Posterior vena cava (tissue), 2 donors: ENCODE measurements at regions of chr19 and their contacts with region 1.

Region 1: DNA sequence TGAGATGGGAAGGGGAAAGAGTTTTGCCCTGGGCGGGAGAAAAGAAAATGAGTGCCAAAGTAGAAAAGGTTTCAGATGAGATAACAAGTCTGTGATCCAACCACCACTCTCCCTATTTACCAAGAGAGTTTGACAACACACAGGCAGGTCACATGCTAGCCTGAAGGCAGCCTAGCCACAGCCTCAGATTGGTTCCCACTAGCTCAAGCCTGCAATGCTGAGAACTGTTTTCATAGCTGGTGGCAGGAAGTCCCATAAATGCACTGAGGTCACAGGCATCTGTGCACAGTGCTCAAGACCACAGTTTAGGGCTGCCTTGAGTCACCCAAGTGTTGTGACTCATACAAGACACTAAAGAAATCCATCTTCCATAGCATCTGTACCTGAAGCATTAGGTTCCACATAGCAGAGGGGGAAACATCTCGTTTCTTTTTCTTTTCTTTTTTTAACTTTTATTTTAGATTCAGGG is 18.5 kb upstream of the POP4 start:
- DNase-seq: no peak

Region 2: DNA sequence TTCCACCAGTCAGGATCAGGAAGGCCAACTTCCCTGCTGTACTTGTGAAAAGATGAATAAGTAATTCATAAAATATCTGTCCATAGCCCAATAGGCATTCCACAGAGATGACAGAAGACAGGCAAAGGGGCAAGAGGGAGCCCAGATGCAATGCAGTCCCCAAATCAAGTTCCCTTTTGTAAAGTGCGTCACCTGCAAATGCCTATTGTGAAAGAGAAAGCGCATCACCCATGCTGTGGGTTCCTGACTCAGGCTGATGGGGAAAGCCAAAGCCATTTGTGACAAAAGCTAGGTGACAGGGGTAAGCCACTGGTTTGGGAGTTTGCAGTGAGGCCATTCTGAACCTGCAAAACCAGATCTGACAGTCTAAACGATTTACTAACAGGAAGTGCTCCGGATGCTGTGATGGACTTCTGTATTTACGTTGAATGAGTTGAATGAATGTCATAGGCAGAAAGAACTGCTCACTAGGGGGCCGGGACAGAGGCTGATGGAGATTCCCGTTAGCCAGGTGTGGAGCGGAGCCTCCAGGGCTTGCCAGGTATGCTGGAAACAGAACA is 627.2 kb after region 1 on chr19:
- intact Hi-C with region 1: no loop called
- DNase-seq: no peak

Region 3: GRCh38 chr19:31280411-31280902 is 1692.9 kb after region 1 on chr19:
- intact Hi-C with region 1: loop called in 1 of 2 experiments (anchors 5 kb)
- DNase-seq: no peak